CD4-positive, alpha-beta memory T cell (primary cell): ENCODE measurements at regions of chr12 and their contacts with region 1.

Region 1: GRCh38 chr12:52023182-52023975 is 16.6 kb downstream of the TAMALIN start:
- DNase-seq: peak; percentile 87 to 94 (median 88)
- H3K4me3 ChIP-seq: peak overlapping the region; percentile 36 to 57
- H3K4me3 Mint-ChIP-seq: peak overlapping the region; percentile 85 to 99 (median 92)
- H3K27ac ChIP-seq: peak overlapping the region; percentile 48
- H3K27ac Mint-ChIP-seq: peak overlapping the region; percentile 91 to 99 (median 97)
- H3K4me1 ChIP-seq: peaks cover 42% of the 10 kb centered on the region
- H3K4me1 Mint-ChIP-seq: peaks cover 29 to 56% (median 39%) of the 10 kb centered on the region in 4 donors
- H3K27me3 ChIP-seq: no peaks in the 10 kb centered on the region
- H3K27me3 Mint-ChIP-seq: no peaks in the 10 kb centered on the region

Region 2: GRCh38 chr12:51886021-51886322 is 137.4 kb before region 1 on chr12:
- CTCF ChIA-PET with region 1: interaction called, 11 read pairs
- POLR2A ChIA-PET with region 1: no interaction called
- intact Hi-C with region 1: no loop called
- DNase-seq: peak; percentile 41 to 56 (median 45)
- H3K4me3 ChIP-seq: no peak overlapping the region
- H3K4me3 Mint-ChIP-seq: peak overlapping the region in 6 of 8 donors; percentile 17 to 60 (median 54)
- H3K27ac ChIP-seq: no peak overlapping the region
- H3K27ac Mint-ChIP-seq: peak overlapping the region; percentile 45 to 88 (median 83)
- H3K4me1 ChIP-seq: peaks cover 14% of the 10 kb centered on the region
- H3K4me1 Mint-ChIP-seq: peaks cover 7 to 17% (median 11%) of the 10 kb centered on the region in 4 donors
- H3K27me3 ChIP-seq: no peaks in the 10 kb centered on the region
- H3K27me3 Mint-ChIP-seq: no peaks in the 10 kb centered on the region

Region 3: DNA sequence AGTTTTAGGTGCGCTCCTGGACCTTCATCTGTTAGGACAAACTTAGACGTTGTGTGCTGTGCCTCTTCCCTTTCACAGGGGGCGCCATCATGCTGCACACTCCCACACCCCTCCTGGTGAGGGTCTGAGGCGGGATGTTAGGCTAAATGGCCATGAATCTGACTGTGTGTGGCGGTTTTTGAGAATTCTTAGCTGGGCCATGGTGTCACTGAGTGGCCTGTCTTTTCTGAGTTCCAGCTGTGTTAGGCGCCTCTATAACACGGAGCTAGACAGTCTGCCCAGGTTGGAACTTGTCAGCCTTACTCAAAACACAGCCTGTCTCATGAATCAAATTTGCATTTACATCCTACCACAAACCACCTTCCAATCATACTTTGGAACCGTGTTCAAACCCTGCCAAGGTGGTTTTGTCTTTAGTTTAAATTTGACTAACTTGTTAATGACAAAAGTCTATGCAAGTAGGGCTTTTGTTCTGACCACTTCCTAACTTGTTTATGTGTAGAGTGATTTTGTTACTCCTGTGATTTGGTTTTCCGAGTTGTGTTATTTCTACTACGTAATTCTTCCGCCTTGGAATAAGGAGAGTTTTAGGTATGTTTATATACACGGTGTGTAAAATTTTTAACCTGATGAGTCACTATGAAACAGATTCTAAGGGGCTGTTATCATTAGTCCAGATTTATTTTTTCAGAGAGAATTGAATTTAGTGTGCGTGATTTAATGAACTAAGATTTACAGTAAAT is 52.3 kb before region 1 on chr12:
- CTCF ChIA-PET with region 1: interaction called, 15 read pairs
- POLR2A ChIA-PET with region 1: interaction called, 4 read pairs
- intact Hi-C with region 1: no loop called
- DNase-seq: peak; percentile 50 to 72 (median 53)
- H3K4me3 ChIP-seq: no peak overlapping the region
- H3K4me3 Mint-ChIP-seq: peak overlapping the region; percentile 31 to 86 (median 66)
- H3K27ac ChIP-seq: peak overlapping the region; percentile 12
- H3K27ac Mint-ChIP-seq: peak overlapping the region; percentile 66 to 91 (median 84)
- H3K4me1 ChIP-seq: peaks cover 62% of the 10 kb centered on the region
- H3K4me1 Mint-ChIP-seq: peaks cover 56 to 72% (median 62%) of the 10 kb centered on the region in 4 donors
- H3K27me3 ChIP-seq: no peaks in the 10 kb centered on the region
- H3K27me3 Mint-ChIP-seq: no peaks in the 10 kb centered on the region

Region 4: DNA sequence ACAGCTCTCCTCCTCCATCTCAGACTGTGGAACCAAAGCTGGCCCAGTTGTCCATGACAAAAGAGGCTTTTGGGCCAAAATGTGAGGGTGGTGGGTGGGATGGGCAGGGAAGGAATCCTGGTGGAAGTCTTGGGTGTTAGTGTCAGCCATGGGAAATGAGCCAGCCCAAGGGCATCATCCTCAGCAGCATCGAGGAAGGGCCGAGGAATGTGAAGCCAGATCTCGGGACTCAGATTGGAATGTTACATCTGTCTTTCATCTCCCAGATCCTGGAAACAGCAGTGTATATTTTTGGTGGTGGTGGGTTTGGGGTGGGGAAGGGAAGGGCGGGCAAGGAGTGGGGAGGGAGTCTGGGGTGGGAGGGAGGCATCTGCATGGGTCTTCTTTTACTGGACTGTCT is 28.4 kb before region 1 on chr12:
- CTCF ChIA-PET with region 1: interaction called, 1,048 read pairs
- POLR2A ChIA-PET with region 1: interaction called, 29 read pairs
- intact Hi-C with region 1: loop called (anchors 1 kb)
- DNase-seq: no peak
- H3K4me3 ChIP-seq: no peak overlapping the region
- H3K4me3 Mint-ChIP-seq: no peak overlapping the region
- H3K27ac ChIP-seq: no peak overlapping the region
- H3K27ac Mint-ChIP-seq: no peak overlapping the region
- H3K4me1 ChIP-seq: no peaks in the 10 kb centered on the region
- H3K4me1 Mint-ChIP-seq: peaks cover 3 to 7% (median 5%) of the 10 kb centered on the region in 4 donors
- H3K27me3 ChIP-seq: no peaks in the 10 kb centered on the region
- H3K27me3 Mint-ChIP-seq: no peaks in the 10 kb centered on the region

Region 5: DNA sequence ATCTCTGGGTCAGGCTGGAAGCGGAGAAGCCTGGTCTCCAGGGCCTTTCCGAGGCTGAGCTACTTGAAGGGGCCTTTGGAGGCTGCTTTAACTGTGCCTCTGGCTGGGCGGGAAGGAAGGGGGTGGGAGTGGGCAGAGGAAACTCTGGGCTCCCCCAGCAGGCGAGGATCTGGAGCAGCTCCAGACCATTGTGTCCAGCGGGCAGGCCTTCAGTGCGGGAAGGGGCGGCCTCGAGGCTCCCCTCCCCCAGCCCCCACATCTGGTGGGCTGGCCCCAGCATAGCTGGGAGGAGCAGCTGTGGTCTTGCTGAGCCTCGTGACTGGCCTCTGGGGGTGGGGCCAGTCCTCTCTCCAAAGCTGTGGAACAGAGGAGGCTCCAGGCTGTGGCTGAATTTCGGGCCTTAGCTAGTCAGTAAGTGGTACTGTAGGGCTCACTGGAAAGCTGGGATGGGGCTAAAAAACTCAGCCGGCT is 13.2 kb before region 1 on chr12:
- CTCF ChIA-PET with region 1: interaction called, 1,048 read pairs
- POLR2A ChIA-PET with region 1: interaction called, 187 read pairs
- intact Hi-C with region 1: loop called (anchors 1 kb)
- DNase-seq: no peak
- H3K4me3 ChIP-seq: no peak overlapping the region
- H3K4me3 Mint-ChIP-seq: no peak overlapping the region
- H3K27ac ChIP-seq: no peak overlapping the region
- H3K27ac Mint-ChIP-seq: peak overlapping the region in 4 of 7 donors; percentile 66 to 89 (median 76)
- H3K4me1 ChIP-seq: peaks cover 28% of the 10 kb centered on the region
- H3K4me1 Mint-ChIP-seq: peaks cover 12 to 48% (median 24%) of the 10 kb centered on the region in 4 donors
- H3K27me3 ChIP-seq: no peaks in the 10 kb centered on the region
- H3K27me3 Mint-ChIP-seq: peaks cover 0 to 2% of the 10 kb centered on the region in 2 donors

Region 6: GRCh38 chr12:52069327-52070184 is 46.2 kb after region 1 on chr12 and contains the start of gene ATG101:
- CTCF ChIA-PET with region 1: interaction called, 289 read pairs
- POLR2A ChIA-PET with region 1: interaction called, 68 read pairs
- intact Hi-C with region 1: loop called (anchors 1 kb)
- DNase-seq: peak; percentile 90 to 92 (median 91)
- H3K4me3 ChIP-seq: peak within 1 kb of the TSS; percentile 92 to 96
- H3K4me3 Mint-ChIP-seq: peak within 1 kb of the TSS; percentile 94 to 100 (median 98)
- H3K27ac ChIP-seq: peak within 1 kb of the TSS; percentile 87
- H3K27ac Mint-ChIP-seq: peak within 1 kb of the TSS; percentile 94 to 100 (median 100)
- H3K4me1 ChIP-seq: peaks cover 42% of the 10 kb centered on the region
- H3K4me1 Mint-ChIP-seq: peaks cover 36 to 48% (median 41%) of the 10 kb centered on the region in 4 donors
- H3K27me3 ChIP-seq: no peaks in the 10 kb centered on the region
- H3K27me3 Mint-ChIP-seq: peaks cover 0 to 2% of the 10 kb centered on the region in 2 donors
- total RNA-seq, gene ATG101: 24.4 to 27.0 TPM

Region 7: DNA sequence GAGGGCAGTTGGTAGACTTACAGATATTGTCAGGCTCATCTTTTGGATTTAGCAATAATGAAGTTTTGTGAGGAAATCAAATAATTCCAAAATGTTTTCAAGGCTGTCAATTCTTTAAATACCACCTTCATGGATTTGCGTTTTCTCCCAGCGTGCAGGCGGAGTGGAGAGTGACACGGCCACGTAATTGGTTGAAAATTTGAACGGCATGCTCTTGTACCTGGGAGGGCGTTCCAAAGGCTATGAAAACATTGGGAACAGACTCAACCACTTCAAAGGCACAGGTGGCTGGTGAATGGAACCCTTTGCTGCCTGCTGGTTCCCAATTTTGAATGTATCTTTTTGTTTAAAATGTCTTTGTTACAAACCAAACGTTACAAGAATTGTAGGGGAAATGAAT is 68.5 kb after region 1 on chr12:
- CTCF ChIA-PET with region 1: interaction called, 434 read pairs
- POLR2A ChIA-PET with region 1: interaction called, 6 read pairs
- intact Hi-C with region 1: no loop called
- DNase-seq: no peak
- H3K4me3 ChIP-seq: no peak overlapping the region
- H3K4me3 Mint-ChIP-seq: no peak overlapping the region
- H3K27ac ChIP-seq: no peak overlapping the region
- H3K27ac Mint-ChIP-seq: no peak overlapping the region
- H3K4me1 ChIP-seq: no peaks in the 10 kb centered on the region
- H3K4me1 Mint-ChIP-seq: no peaks in the 10 kb centered on the region
- H3K27me3 ChIP-seq: peaks cover 6% of the 10 kb centered on the region
- H3K27me3 Mint-ChIP-seq: peaks cover 43 to 50% of the 10 kb centered on the region in 2 donors

Region 8: DNA sequence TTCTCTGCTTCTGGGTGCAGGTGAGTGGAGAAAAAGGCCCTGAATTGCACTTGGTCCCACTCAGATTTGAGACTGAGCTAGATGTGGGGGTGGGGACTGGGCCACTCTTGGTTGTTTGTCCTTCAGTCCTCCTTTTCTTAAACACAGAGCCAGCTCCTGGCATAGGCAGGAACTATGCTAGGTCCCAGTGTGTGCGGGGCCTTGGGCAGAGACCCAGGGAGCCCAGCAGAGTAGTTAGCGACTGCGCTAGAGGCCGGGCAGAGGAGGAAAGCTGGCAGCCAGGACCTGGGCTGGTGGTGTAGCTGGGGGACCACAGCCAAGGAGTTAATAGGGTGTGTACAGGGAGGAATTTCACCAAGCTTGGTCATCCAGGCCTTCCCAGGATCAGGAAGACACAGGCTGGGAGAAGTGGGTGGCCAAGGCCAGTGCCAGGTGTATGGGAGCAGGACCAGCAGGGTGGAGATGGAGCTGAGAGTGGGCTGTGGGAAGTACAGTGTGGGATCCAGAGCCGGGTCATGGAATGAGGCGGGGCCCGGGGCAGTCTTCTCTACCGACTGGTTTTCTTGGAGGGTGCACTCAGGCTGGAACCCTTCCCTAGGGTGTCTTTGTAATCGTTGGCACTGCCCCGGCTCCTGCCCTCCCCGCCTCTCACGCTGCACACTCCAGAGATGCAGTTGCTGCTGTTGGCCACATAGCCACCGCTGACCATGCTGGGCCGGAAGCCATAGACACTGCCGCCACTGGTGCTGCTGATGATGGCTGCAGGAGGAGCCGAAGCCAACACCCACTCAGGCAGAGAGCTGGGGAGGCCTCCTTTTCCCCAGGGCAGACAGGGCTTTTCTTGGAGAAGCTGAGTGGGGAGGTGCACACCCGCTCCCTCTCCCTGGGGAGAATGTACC is 520.9 kb after region 1 on chr12:
- CTCF ChIA-PET with region 1: no interaction called
- POLR2A ChIA-PET with region 1: no interaction called
- intact Hi-C with region 1: no loop called
- DNase-seq: no peak
- H3K4me3 ChIP-seq: no peak overlapping the region
- H3K4me3 Mint-ChIP-seq: no peak overlapping the region
- H3K27ac ChIP-seq: no peak overlapping the region
- H3K27ac Mint-ChIP-seq: no peak overlapping the region
- H3K4me1 ChIP-seq: no peaks in the 10 kb centered on the region
- H3K4me1 Mint-ChIP-seq: no peaks in the 10 kb centered on the region
- H3K27me3 ChIP-seq: no peaks in the 10 kb centered on the region
- H3K27me3 Mint-ChIP-seq: peaks cover 4 to 14% of the 10 kb centered on the region in 2 donors